Colonic mucosa (tissue), 4 donors: ENCODE measurements at regions of chr6 and their contacts with region 1.

Region 1: GRCh38 chr6:168050881-168051586 is 28.0 kb downstream of the FRMD1 start:
- DNase-seq: no peak
- H3K4me3 ChIP-seq: no peak overlapping the region
- H3K27ac ChIP-seq: no peak overlapping the region
- H3K4me1 ChIP-seq: no peaks in the 10 kb centered on the region
- H3K27me3 ChIP-seq: no peaks in the 10 kb centered on the region
- CTCF ChIP-seq: no peak

Region 2: GRCh38 chr6:167910016-167910415 is 141.0 kb before region 1 on chr6:
- intact Hi-C with region 1: loop called (anchors 5 kb)
- DNase-seq: no peak
- H3K4me3 ChIP-seq: no peak overlapping the region
- H3K27ac ChIP-seq: no peak overlapping the region
- H3K4me1 ChIP-seq: no peaks in the 10 kb centered on the region
- H3K27me3 ChIP-seq: no peaks in the 10 kb centered on the region
- CTCF ChIP-seq: no peak